ENCODE measurements at regions of chr14 and their contacts with region 1.

Region 1: GRCh38 chr14:21768116-21768874 is 94.7 kb upstream of the OR4E1 start:
- DNase-seq: peak; percentile 39
- H3K4me3 Mint-ChIP-seq: peak overlapping the region; percentile 72
- H3K27ac Mint-ChIP-seq: peak overlapping the region; percentile 83
- H3K4me1 Mint-ChIP-seq: peaks cover 9% of the 10 kb centered on the region
- H3K27me3 Mint-ChIP-seq: no peaks in the 10 kb centered on the region

Region 2: DNA sequence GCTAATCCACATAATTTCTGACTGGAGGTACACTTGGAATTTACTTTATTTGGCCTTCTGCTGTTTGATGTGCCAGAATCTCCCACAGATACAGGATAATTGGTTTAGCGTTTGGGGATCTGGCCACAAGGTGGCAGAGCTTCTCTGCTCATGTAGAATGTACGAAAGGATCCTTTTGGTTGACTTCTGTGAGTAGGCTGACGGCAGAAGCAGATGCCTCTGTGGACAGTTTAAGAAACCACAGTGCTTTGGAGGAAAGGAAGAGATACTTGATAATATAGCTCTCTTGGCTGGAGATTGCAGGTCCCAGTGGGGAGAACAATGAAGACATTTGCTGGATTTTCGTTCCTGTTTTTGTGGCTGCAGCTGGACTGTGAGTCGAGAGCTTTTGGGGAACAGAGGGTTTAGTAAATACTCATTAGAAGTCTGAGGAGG is 19.4 kb before region 1 on chr14:
- CTCF ChIA-PET with region 1: interaction called, 7 read pairs
- intact Hi-C with region 1: loop called (anchors 2 kb)
- DNase-seq: peak; percentile 81
- H3K4me3 Mint-ChIP-seq: peak overlapping the region; percentile 71
- H3K27ac Mint-ChIP-seq: peak overlapping the region; percentile 67
- H3K4me1 Mint-ChIP-seq: peaks cover 10% of the 10 kb centered on the region
- H3K27me3 Mint-ChIP-seq: peaks cover 4% of the 10 kb centered on the region

Region 3: DNA sequence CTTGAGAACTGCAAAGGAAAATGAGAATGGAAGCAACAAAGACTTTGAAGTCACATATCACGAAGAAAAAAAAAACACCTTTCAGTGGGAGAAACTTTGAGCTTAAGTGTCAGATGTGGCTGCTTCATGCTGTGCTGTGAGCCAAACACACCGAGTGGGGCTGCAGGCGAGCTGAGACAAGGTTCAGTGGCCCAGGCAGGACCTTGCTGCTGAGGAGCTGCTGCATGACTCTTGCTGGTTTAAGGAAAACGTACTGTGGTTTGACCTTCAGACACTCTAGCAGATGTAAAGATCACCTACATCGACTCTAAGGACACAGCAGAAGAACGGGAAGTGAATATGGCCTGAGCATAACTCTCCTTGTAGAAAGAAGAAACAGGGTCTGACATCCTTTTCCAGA is 23.5 kb after region 1 on chr14:
- CTCF ChIA-PET with region 1: interaction called, 8 read pairs
- intact Hi-C with region 1: loop called (anchors 2 kb)
- DNase-seq: no peak
- H3K4me3 Mint-ChIP-seq: no peak overlapping the region
- H3K27ac Mint-ChIP-seq: peak overlapping the region; percentile 19
- H3K4me1 Mint-ChIP-seq: peaks cover 10% of the 10 kb centered on the region
- H3K27me3 Mint-ChIP-seq: no peaks in the 10 kb centered on the region

Region 4: GRCh38 chr14:21825149-21825743 is 57.0 kb after region 1 on chr14:
- CTCF ChIA-PET with region 1: interaction called, 4 read pairs
- intact Hi-C with region 1: loop called (anchors 5 kb)
- DNase-seq: peak; percentile 68
- H3K4me3 Mint-ChIP-seq: peak overlapping the region; percentile 71
- H3K27ac Mint-ChIP-seq: peak overlapping the region; percentile 15
- H3K4me1 Mint-ChIP-seq: peaks cover 4% of the 10 kb centered on the region
- H3K27me3 Mint-ChIP-seq: peaks cover 17% of the 10 kb centered on the region

Region 5: GRCh38 chr14:21852061-21852664 is 83.9 kb after region 1 on chr14:
- CTCF ChIA-PET with region 1: interaction called, 3 read pairs
- intact Hi-C with region 1: loop called (anchors 5 kb)
- DNase-seq: peak; percentile 89
- H3K4me3 Mint-ChIP-seq: peak overlapping the region; percentile 68
- H3K27ac Mint-ChIP-seq: peak overlapping the region; percentile 86
- H3K4me1 Mint-ChIP-seq: peaks cover 13% of the 10 kb centered on the region
- H3K27me3 Mint-ChIP-seq: peaks cover 7% of the 10 kb centered on the region

Measured in activated naive CD4-positive, alpha-beta T cell treated with anti-CD3 and anti-CD28 coated beads for 36 hours (primary cell).